ENCODE measurements at regions of chr2 and their contacts with region 1.

Region 1: GRCh38 chr2:28751252-28751955 is at the start of gene PPP1CB:
- DNase-seq: peak; percentile 96
- H3K4me3 Mint-ChIP-seq: peak within 1 kb of the TSS; percentile 85
- H3K27ac Mint-ChIP-seq: peak within 1 kb of the TSS; percentile 96
- H3K4me1 Mint-ChIP-seq: peaks cover 51% of the 10 kb centered on the region
- H3K27me3 Mint-ChIP-seq: no peaks in the 10 kb centered on the region
- total RNA-seq, gene PPP1CB: 238 to 256 TPM

Region 2: DNA sequence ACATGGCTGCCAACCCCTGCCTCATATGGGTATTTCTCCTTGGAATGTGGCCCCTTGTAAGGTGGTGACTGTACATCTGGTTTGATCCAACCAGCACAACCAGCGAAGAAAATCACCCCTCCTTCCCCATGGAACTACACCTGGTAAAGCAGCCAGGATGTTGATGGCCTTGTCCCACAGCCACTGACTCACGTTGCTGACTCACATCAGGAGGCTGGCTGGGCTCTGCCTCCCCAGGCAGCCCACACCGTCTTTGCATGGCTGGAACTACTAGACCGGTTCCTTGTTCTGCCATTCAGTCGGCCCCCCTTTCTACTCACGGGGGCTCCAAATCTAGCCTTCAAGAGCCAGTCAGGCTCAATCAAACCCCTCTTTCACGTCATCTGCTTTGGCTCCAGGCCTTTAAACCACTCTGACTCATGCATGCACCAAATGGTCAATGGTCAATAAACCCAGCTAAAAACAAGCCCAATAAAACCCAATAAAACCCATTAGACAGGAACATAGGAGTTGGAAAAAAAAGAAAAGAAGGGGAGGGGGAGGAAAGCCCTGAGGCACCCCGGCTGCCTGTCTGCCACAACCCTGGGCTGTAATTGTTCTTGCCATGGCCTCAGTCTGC is 140.7 kb before region 1 on chr2:
- CTCF ChIA-PET with region 1: interaction called, 3 read pairs
- POLR2A ChIA-PET with region 1: interaction called, 9 read pairs
- intact Hi-C with region 1: loop called (anchors 1 kb)
- DNase-seq: peak; percentile 82
- H3K4me3 Mint-ChIP-seq: peak overlapping the region; percentile 30
- H3K27ac Mint-ChIP-seq: peak overlapping the region; percentile 53
- H3K4me1 Mint-ChIP-seq: peaks cover 25% of the 10 kb centered on the region
- H3K27me3 Mint-ChIP-seq: no peaks in the 10 kb centered on the region

Region 3: GRCh38 chr2:28665041-28665704 is 86.2 kb before region 1 on chr2:
- CTCF ChIA-PET with region 1: no interaction called
- POLR2A ChIA-PET with region 1: no interaction called
- intact Hi-C with region 1: no loop called
- DNase-seq: no peak
- H3K4me3 Mint-ChIP-seq: no peak overlapping the region
- H3K27ac Mint-ChIP-seq: no peak overlapping the region
- H3K4me1 Mint-ChIP-seq: peaks cover 2% of the 10 kb centered on the region
- H3K27me3 Mint-ChIP-seq: no peaks in the 10 kb centered on the region

Region 4: GRCh38 chr2:28681158-28681571 is 70.2 kb before region 1 on chr2:
- CTCF ChIA-PET with region 1: interaction called, 3 read pairs
- POLR2A ChIA-PET with region 1: interaction called, 12 read pairs
- intact Hi-C with region 1: loop called (anchors 1 kb)
- DNase-seq: peak; percentile 85
- H3K4me3 Mint-ChIP-seq: no peak overlapping the region
- H3K27ac Mint-ChIP-seq: peak overlapping the region; percentile 89
- H3K4me1 Mint-ChIP-seq: peaks cover 43% of the 10 kb centered on the region
- H3K27me3 Mint-ChIP-seq: no peaks in the 10 kb centered on the region

Region 5: DNA sequence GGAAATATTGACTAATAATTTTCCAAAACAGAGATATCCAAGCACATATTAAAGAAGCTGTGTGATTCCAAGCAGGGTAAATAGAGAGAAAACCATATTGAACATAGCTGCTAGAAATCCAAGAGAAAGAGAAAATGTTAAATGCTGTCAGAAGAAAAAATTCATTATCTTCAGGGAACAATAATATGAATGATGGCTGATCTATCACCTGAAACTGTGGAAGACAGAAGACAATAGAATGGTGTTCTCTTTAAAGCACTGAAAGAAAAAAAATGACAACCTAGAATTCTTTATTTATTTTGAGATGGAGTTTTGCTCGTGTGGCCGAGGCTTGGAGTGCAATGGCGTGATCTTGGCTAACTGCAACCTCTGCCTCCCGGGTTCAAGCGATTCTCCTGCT is 17.5 kb after region 1 on chr2:
- CTCF ChIA-PET with region 1: no interaction called
- POLR2A ChIA-PET with region 1: no interaction called
- intact Hi-C with region 1: no loop called
- DNase-seq: no peak
- H3K4me3 Mint-ChIP-seq: no peak overlapping the region
- H3K27ac Mint-ChIP-seq: no peak overlapping the region
- H3K4me1 Mint-ChIP-seq: peaks cover 78% of the 10 kb centered on the region
- H3K27me3 Mint-ChIP-seq: no peaks in the 10 kb centered on the region

Region 6: GRCh38 chr2:28810384-28811285 is 59.2 kb after region 1 on chr2 and contains the start of gene SPDYA:
- CTCF ChIA-PET with region 1: interaction called, 5 read pairs
- POLR2A ChIA-PET with region 1: interaction called, 3 read pairs
- intact Hi-C with region 1: loop called (anchors 1 kb)
- DNase-seq: peak; percentile 86
- H3K4me3 Mint-ChIP-seq: peak within 1 kb of the TSS; percentile 74
- H3K27ac Mint-ChIP-seq: no peak within 1 kb of the TSS
- H3K4me1 Mint-ChIP-seq: peaks cover 13% of the 10 kb centered on the region
- H3K27me3 Mint-ChIP-seq: peaks cover 2% of the 10 kb centered on the region
- total RNA-seq, gene SPDYA: 0.92 to 1.1 TPM